G401 (cell line): ENCODE measurements at regions of chr16 and their contacts with region 1.

Region 1: DNA sequence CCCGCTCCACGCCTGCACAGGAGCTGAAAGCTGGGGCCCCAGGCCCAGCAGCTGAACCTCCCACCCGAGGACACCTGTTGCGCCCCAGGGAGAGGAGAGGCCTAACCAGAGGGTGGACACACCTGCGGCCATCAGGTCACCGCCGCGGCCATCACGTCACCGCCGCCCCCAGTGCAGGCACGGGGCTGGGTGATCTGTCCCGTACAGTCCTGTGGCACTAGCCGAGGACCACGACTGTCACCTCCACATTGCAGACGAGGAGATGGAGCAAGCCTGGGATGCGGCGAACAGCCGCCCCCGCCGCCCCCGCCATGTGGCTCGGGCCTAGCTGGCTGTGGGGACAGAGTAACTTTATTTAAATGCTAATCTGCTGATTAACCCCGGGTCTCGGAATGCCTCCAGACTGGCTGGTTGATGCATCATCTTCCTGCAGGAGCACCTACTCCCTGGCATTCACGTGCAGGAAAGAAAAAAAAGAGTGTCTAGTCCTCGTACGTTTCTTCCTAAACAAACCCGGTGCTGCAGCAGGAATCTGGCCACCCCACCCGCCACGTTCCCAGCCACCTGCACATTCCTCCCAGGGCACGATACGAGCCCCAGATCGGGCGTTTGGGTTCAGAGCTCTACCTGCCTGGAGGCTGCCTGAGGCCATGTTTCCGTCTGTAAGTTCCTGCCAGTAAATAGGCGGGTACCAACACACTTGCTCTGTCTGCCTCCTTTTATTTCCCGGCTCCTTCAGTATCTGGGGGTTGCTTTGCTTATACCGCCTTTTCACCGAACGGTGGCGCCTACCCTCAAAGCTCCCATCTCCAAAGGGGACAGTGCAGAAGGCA is 29.9 kb downstream of the PIEZO1 start:
- DNase-seq: no peak

Region 2: GRCh38 chr16:88651276-88651988 is 103.7 kb before region 1 on chr16:
- in situ Hi-C with region 1: no loop called
- DNase-seq: no peak

Region 3: GRCh38 chr16:88672776-88673175 is 82.4 kb before region 1 on chr16:
- in situ Hi-C with region 1: loop called (anchors 10 kb)
- DNase-seq: no peak

Region 4: DNA sequence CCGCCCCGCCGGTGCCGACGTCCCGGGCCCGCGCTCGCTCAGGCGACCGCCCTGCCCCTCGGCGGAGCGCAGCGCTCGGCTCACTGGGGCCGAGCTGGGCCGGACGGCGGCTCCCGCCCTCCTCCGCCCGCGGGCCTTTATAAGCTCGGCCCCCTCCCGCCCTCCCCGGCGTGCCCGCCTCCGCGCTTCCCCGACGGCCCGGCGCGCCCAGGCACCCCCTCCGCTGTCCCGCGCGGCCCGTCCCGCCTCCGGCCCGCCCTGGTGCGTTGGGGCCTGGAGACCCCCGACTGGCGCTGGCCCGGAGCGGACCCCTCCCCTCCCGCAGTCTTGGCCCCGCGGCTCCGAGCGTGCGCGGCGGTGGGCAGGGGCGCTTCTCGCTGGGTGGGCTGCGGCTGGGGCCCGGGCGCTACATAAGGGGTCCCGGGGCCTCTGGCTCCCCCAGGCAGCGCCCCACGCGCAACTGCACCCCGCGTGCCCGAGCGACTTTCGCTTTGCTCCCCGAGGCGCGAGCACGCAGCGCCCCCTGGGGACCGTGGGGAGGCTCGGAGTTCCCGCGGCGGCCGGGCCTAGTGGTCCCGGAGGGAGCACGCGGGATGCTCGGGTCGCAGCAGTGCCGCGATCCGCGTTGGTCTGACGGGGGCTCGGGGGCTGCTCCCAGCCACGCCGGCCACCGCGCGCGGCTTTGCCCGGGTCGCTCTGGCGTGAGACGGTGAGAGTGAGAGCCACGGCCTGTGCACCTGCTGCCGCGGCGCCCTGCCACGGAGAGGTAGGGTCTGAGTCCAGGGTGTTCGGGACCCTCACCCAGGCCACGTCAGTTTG is 30.2 kb after region 1 on chr16 and contains the start of gene PIEZO1:
- in situ Hi-C with region 1: loop called (anchors 5 kb)
- DNase-seq: no peak
- total RNA-seq, gene PIEZO1: 69.8 and 75.6 TPM in 2 replicates

Region 5: GRCh38 chr16:89115216-89115861 is 360.2 kb after region 1 on chr16:
- in situ Hi-C with region 1: no loop called
- DNase-seq: no peak